Aorta (tissue), 5 donors: ENCODE measurements at regions of chr15 and their contacts with region 1.

Region 1: GRCh38 chr15:31326156-31326732 is 391 bp upstream of the KLF13 start:
- DNase-seq: peak; percentile 97 to 99
- ATAC-seq: peak; percentile 97
- H3K4me3 ChIP-seq: peak overlapping the region; percentile 70 to 79
- H3K27ac ChIP-seq: peak overlapping the region; percentile 81 to 91
- H3K4me1 ChIP-seq: peaks cover 0 to 3% of the 10 kb centered on the region in 2 donors
- H3K27me3 ChIP-seq: no peaks in the 10 kb centered on the region

Region 2: GRCh38 chr15:31215490-31216214 is 110.6 kb before region 1 on chr15:
- intact Hi-C with region 1: loop called (anchors 5 to 10 kb)
- DNase-seq: peak; percentile 88
- ATAC-seq: peak; percentile 89
- H3K4me3 ChIP-seq: peak overlapping the region; percentile 18 to 77
- H3K27ac ChIP-seq: peak overlapping the region in 1 of 2 donors; percentile 15
- H3K4me1 ChIP-seq: peaks cover 0 to 3% of the 10 kb centered on the region in 2 donors
- H3K27me3 ChIP-seq: no peaks in the 10 kb centered on the region

Region 3: DNA sequence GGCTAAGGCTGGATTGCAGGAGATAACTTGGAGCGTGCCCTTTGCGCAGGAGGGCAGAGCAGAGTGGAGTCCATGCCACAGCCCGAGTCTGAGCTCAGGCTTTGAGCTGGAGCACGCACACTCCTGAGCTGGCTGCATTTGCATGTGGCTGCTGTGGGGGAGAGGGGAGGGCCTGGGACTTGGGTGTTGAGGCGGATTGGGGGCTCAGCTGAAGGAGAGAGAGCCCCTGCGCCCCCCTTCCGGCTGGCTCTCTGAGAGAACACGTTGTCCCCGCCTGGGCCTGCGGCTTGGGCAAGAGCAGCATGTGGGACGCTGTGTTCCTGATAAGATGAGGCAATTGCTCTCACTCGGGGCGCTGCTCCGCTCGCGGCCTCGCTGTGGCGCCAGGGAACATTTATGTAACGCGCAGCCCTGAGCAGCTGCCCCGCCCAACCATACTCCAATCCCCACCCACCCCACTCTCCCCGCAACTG is 39.4 kb after region 1 on chr15:
- intact Hi-C with region 1: loop called in 1 of 2 experiments (anchors 5 kb)
- DNase-seq: peak; percentile 90 to 91
- ATAC-seq: peak; percentile 94
- H3K4me3 ChIP-seq: no peak overlapping the region
- H3K27ac ChIP-seq: peak overlapping the region in 1 of 2 donors; percentile 80
- H3K4me1 ChIP-seq: peaks cover 0 to 3% of the 10 kb centered on the region in 2 donors
- H3K27me3 ChIP-seq: no peaks in the 10 kb centered on the region

Region 4: DNA sequence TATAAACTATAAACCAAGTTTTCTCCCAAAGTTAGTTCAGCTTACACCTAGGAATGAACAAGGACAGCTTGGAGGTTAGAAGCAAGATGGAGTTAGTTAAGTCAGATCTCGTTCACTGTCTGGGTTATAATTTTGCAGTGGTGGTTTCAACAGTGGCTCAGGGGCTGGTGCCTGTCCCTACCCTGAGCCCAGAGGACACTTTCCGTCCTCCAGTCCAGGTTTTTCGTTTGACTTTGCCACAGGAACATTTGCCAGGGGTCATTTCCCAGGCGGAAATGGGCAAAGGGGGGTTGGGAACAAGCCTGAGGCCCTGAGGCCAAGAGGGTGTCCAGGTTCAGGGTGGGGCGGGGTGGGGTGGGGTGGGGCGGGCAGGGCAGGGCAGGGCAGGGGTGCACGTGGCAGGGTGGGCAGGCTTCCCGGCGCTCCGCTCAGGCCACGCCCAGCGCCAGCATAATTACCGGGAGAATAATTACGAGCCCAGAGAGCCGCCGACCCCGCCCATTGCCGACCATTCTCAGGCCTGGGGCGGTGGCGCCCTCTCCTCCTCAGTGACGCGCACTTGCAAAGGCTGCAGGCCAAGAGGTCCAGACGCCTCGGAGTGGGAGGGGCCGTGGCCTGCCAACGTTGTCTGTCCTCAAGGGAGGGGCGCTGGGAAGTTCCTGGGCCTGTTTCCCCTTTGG is 70.8 kb after region 1 on chr15:
- intact Hi-C with region 1: no loop called
- DNase-seq: peak; percentile 91 to 92
- ATAC-seq: peak; percentile 88
- H3K4me3 ChIP-seq: no peak overlapping the region
- H3K27ac ChIP-seq: peak overlapping the region in 1 of 2 donors; percentile 47
- H3K4me1 ChIP-seq: no peaks in the 10 kb centered on the region
- H3K27me3 ChIP-seq: no peaks in the 10 kb centered on the region

Region 5: DNA sequence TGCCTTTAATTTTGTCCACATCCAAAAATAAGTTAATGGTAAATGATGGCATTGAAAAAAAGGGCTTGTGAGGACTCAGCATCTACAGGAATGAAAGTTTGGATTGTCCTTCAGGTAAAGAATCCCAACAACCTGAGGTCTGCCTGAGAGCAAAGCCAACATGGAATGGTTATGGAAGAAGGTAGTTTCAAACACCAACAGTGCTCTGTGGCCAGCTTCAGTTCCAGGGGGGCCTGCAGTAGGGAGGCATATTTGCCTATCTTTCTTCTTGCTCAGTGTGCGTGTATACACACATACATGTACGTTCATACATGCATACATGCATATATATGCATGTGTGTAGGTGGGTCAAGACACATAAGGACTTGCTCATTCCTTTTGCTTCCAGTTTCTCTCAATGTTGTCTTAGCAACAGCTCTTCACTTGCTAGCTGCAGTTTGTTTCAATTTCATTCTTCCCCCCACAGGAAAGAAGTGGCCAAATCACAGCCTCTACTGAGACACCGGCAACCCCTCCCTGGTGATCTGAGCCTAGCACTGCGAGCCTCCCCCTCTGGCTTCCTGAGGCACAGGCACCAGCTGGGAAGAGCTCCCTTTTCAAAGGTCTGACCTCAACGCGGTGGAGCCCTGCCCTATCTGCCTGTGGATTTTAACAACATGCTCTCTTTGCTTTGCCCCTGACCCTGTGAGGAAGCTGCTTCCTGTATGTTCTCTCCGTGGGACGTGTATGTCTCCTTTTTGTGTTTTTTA is 146.6 kb after region 1 on chr15:
- intact Hi-C with region 1: loop called in 1 of 2 experiments (anchors 10 kb)
- DNase-seq: no peak
- ATAC-seq: no peak
- H3K4me3 ChIP-seq: no peak overlapping the region
- H3K27ac ChIP-seq: no peak overlapping the region
- H3K4me1 ChIP-seq: no peaks in the 10 kb centered on the region
- H3K27me3 ChIP-seq: no peaks in the 10 kb centered on the region

Region 6: DNA sequence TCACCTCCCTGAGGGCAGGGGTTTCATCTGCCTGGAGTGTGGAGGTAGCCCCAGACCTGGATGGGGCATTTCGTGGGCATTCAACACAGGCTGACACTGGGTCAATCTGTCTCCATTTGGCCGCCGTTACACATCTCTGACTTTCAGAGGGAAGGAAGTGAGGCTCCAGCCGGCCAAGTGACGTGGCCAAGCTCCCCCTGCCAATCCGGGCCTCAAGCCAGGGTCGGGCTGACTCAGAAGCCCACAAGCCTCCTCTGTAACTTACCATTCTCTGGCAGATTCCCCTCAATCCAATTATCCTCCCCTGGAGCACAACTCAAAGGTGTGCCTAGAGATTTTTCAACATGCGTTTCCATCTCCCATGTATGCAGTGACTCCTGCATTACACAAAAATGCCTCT is 228.0 kb after region 1 on chr15:
- intact Hi-C with region 1: no loop called
- DNase-seq: peak; percentile 81 to 85
- ATAC-seq: peak; percentile 71
- H3K4me3 ChIP-seq: no peak overlapping the region
- H3K27ac ChIP-seq: no peak overlapping the region
- H3K4me1 ChIP-seq: no peaks in the 10 kb centered on the region
- H3K27me3 ChIP-seq: no peaks in the 10 kb centered on the region

Region 7: GRCh38 chr15:31867536-31868442 is 541.5 kb after region 1 on chr15:
- intact Hi-C with region 1: loop called in 1 of 2 experiments (anchors 10 kb)
- DNase-seq: no peak
- ATAC-seq: peak; percentile 55
- H3K4me3 ChIP-seq: no peak overlapping the region
- H3K27ac ChIP-seq: no peak overlapping the region
- H3K4me1 ChIP-seq: no peaks in the 10 kb centered on the region
- H3K27me3 ChIP-seq: no peaks in the 10 kb centered on the region